ENCODE measurements at regions of chr5 and their contacts with region 1.

Region 1: DNA sequence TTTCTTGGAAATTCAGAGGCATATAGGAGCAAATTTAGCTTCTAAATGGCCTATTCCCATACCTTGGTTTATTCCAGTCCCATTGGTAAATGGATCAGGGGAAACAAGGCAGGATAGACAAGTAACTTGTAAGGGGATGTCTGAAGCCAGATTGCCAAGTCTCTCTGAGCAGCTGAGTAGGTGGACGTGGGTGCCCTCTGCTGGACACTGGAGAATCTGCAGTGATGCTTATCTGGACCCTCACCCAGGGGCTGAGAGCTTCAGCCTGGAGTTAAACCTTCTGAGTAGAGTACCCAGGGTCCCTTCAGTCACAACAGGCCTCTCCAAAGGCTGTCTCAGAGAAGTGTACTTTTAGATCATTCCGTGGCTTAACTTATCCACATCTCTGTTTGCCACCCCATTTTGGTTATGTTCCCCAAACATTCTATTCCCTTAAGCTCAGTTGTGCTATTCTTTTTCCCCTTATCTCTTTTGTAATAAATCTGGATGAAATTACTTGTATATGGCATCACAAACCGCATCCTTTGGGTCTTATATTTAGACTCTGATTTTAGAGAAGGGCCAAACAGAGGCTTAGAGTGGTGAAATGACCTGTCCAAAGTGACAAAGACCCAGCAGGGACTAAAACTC is 218.3 kb upstream of the GLRA1 start:
- DNase-seq: peak; percentile 73
- H3K4me3 Mint-ChIP-seq: no peak overlapping the region
- H3K27ac Mint-ChIP-seq: no peak overlapping the region
- H3K4me1 Mint-ChIP-seq: no peaks in the 10 kb centered on the region
- H3K27me3 Mint-ChIP-seq: no peaks in the 10 kb centered on the region

Region 2: DNA sequence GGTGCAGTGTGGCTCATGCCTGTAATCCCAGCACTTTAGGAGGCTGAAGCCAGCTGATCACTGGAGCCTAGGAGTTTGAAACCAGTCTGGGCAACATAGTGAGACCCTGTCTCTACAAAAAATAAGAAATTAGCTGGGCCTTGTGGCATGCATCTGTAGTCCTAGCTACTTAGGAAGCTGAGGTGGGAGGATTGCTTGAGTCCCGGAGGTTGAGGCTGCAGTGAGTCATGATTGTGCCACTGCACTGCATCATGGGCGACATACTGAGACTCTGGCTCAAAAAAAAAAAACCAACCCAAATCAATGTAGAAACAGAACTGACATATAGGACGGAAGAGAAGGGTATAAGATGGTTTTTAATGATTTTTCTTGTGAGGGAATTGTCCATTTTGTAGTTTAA is 343.5 kb before region 1 on chr5:
- CTCF ChIA-PET with region 1: interaction called, 13 read pairs
- POLR2A ChIA-PET with region 1: no interaction called
- intact Hi-C with region 1: no loop called
- DNase-seq: peak; percentile 37
- H3K4me3 Mint-ChIP-seq: no peak overlapping the region
- H3K27ac Mint-ChIP-seq: peak overlapping the region; percentile 6
- H3K4me1 Mint-ChIP-seq: peaks cover 27% of the 10 kb centered on the region
- H3K27me3 Mint-ChIP-seq: no peaks in the 10 kb centered on the region

Region 3: GRCh38 chr5:152092580-152092979 is 50.4 kb before region 1 on chr5:
- CTCF ChIA-PET with region 1: no interaction called
- POLR2A ChIA-PET with region 1: no interaction called
- intact Hi-C with region 1: no loop called
- DNase-seq: no peak
- H3K4me3 Mint-ChIP-seq: no peak overlapping the region
- H3K27ac Mint-ChIP-seq: no peak overlapping the region
- H3K4me1 Mint-ChIP-seq: peaks cover 14% of the 10 kb centered on the region
- H3K27me3 Mint-ChIP-seq: no peaks in the 10 kb centered on the region

Region 4: DNA sequence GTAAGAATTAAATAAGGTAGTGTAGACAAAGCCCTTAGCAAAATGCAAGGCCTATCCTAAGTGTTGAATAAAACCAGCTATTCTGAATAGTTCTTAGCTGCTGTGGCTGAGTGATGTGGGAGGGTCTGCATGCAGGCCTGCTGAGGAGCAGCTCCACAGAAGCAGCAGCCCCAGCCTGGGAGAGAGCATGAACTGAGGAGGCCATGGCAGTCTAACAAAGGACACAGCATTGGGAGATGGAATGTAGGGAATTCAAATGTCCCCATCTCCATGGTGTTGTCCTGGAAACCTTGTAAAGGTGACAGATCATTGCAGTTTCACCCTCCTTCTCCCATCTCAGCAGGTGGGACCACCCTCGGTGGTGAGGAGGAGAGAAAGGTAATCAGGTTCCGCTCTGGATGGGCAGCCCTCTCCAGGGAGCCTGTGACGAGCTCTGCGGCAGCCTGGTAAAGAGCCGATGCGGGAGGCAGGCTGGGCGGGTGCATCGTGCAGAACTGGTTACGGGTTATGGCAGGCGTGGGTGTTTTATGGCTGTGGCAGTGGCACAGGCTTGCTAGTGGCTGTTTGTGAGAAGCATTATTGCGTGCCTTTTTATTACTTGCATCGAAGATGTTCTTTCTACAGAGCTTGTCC is 18.4 kb before region 1 on chr5:
- CTCF ChIA-PET with region 1: interaction called, 17 read pairs
- POLR2A ChIA-PET with region 1: no interaction called
- intact Hi-C with region 1: no loop called
- DNase-seq: no peak
- H3K4me3 Mint-ChIP-seq: no peak overlapping the region
- H3K27ac Mint-ChIP-seq: no peak overlapping the region
- H3K4me1 Mint-ChIP-seq: no peaks in the 10 kb centered on the region
- H3K27me3 Mint-ChIP-seq: no peaks in the 10 kb centered on the region

Measured in activated CD4-positive, alpha-beta memory T cell treated with anti-CD3 and anti-CD28 coated beads for 36 hours (primary cell).